ENCODE measurements at regions of chr17 and their contacts with region 1.

Region 1: DNA sequence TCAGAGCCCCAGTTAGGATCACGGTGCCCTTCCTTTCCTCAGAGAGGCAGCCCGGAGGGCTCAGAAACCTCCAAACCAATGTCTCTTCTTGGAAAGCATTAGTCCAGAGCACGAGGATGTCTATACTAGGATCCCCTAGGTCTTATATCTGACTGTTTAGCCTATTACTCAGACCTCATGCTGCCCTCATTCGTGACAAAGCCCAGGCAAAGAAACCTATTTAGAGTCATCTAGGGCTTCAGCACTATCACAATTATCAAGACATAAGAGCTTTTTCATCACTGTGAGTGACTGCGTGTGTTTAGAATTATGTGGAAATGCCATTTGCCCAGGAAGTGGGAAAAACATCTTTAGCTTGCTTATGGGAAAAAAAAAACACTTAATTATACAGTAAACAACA is 159.8 kb upstream of the NOL11 start:
- DNase-seq: no peak
- H3K4me3 ChIP-seq: no peak overlapping the region
- H3K27ac ChIP-seq: no peak overlapping the region
- H3K4me1 ChIP-seq: no peaks in the 10 kb centered on the region
- H3K27me3 ChIP-seq: no peaks in the 10 kb centered on the region
- CTCF ChIP-seq: no peak

Region 2: GRCh38 chr17:67528751-67529436 is 29.0 kb before region 1 on chr17:
- CTCF ChIA-PET with region 1: no interaction called
- POLR2A ChIA-PET with region 1: interaction called, 21 read pairs
- intact Hi-C with region 1: no loop called
- DNase-seq: peak; percentile 76 to 81
- H3K4me3 ChIP-seq: peak overlapping the region; percentile 26; the same call in 1 of the 2 replicates
- H3K27ac ChIP-seq: peak overlapping the region; percentile 10; the same call in 1 of the 2 replicates
- H3K4me1 ChIP-seq: peaks cover 9% of the 10 kb centered on the region; the same call in 1 of the 2 replicates
- H3K27me3 ChIP-seq: no peaks in the 10 kb centered on the region
- CTCF ChIP-seq: no peak